ENCODE measurements at regions of chr1 and their contacts with region 1.

Region 1: DNA sequence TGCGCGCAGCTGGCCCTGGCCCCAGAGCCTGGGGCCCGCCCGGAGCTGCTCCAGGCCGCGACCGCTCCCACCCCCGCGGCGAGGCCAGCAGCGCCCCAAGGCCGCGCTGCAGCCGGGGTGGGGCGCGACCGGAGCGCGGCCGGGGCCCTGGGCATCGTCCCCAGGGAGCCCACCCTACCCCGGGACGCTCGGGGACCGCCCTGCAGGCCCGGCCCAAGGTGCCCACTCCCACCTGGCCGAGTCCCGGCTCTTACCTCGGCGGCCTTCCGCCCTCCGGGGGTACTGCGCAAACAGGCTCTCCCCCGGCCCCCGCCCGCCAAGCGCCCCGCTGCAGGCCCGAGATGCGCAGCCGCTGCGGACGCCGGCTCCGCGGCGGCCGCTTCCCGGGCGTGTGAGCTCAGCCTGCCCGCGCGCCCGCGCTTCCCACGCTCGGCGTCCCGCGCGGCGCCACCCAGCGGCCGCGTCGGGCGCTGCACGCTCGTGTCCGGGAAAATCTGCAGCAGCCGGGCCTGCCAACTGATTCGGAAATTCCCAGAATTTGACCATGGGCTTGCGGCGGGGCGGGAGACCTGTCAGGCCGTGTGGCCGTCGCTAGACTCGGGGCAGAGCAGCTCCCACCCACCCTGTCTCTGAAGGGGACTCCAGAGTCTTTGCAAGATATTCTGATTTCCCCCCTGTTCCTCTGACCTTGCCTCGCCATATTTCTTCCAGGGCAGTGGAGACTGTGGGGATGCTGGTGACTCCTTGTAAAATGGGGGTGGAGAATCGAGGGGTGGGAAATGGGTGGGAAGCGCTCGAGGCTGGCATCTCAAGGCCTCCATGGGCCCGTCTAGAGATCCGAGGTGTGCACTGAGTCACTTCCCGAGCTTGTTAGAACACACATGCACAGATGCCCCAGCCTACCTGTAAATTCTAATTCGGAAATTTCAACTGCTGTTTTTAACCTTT is 41.9 kb downstream of the CD34 start:
- DNase-seq: peak; percentile 57 to 86 (median 79)
- ATAC-seq: peak; percentile 79
- H3K4me3 ChIP-seq: peak overlapping the region; percentile 86
- H3K4me3 Mint-ChIP-seq: peak overlapping the region; percentile 74 to 99 (median 94)
- H3K27ac ChIP-seq: peak overlapping the region; percentile 78
- H3K27ac Mint-ChIP-seq: peak overlapping the region; percentile 91 to 98 (median 93)
- H3K4me1 ChIP-seq: peaks cover 39 to 80% of the 10 kb centered on the region in 2 donors
- H3K4me1 Mint-ChIP-seq: peaks cover 52 to 85% (median 77%) of the 10 kb centered on the region in 7 donors
- H3K27me3 ChIP-seq: no peaks in the 10 kb centered on the region
- H3K27me3 Mint-ChIP-seq: no peaks in the 10 kb centered on the region

Region 2: DNA sequence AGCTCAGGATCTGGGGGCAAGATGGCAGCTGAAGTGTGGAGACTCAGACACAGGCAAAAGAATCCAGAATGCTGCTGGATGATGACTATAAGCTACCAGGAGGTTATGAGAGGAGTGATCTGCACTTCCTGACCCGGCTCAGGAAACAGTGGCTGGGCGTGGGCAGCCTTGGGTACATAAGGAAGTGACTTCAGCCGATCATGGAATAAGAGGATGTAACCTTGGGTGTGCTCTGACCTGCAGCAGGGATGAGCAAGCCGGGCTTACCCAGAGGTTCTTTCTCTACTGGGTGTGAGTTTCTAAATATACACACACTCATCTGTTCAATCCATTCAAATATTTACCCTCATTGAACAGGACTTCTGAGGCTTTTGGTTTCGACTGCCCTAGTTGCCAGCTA is 20.8 kb before region 1 on chr1:
- CTCF ChIA-PET with region 1: interaction called, 6 read pairs
- POLR2A ChIA-PET with region 1: interaction called, 8 read pairs
- intact Hi-C with region 1: loop called (anchors 2 kb)
- DNase-seq: peak in 1 of 9 donors; percentile 55
- ATAC-seq: peak; percentile 86
- H3K4me3 ChIP-seq: no peak overlapping the region
- H3K4me3 Mint-ChIP-seq: peak overlapping the region; percentile 39 to 84 (median 62)
- H3K27ac ChIP-seq: peak overlapping the region; percentile 27
- H3K27ac Mint-ChIP-seq: peak overlapping the region in 8 of 9 donors; percentile 5 to 88 (median 66)
- H3K4me1 ChIP-seq: peaks cover 43 to 69% of the 10 kb centered on the region in 2 donors
- H3K4me1 Mint-ChIP-seq: peaks cover 72 to 97% (median 92%) of the 10 kb centered on the region in 7 donors
- H3K27me3 ChIP-seq: no peaks in the 10 kb centered on the region
- H3K27me3 Mint-ChIP-seq: no peaks in the 10 kb centered on the region

Measured in naive thymus-derived CD4-positive, alpha-beta T cell (primary cell).